MCF 10A (cell line): ENCODE measurements at regions of chr15 and their contacts with region 1.

Region 1: GRCh38 chr15:71780115-71780976 is 30.0 kb upstream of the NR2E3 start:
- DNase-seq: peak; percentile 57
- H3K4me3 Mint-ChIP-seq: no peak overlapping the region
- H3K27ac Mint-ChIP-seq: peak overlapping the region; percentile 76
- H3K4me1 Mint-ChIP-seq: peaks cover 10% of the 10 kb centered on the region
- H3K27me3 Mint-ChIP-seq: no peaks in the 10 kb centered on the region
- CTCF ChIP-seq: peak; percentile 66

Region 2: DNA sequence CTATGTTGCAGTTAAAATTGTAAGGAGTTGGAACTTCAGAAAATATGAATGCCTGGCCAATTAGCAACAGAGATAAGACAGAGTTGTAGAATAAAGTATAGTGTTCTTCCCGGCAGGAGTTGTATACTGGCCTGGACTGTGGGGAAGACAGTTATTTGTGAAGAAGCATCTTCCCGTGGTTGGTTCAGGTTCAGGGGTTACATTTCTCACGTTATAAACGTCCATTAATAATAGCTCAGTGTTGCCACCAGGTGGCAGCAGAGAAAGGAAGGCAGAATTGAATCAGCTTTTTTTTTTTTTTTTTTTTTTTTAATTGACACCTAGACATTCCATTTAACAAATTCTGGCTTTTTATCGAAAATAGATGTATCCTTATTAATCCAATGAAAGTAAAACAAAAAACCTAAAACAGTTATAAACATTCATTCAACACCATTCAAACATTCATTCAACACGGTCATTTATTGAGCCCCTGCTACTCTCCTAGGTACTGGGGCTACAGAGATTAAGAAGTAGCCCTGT is 36.4 kb before region 1 on chr15:
- CTCF ChIA-PET with region 1: interaction called, 15 read pairs
- POLR2A ChIA-PET with region 1: interaction called, 3 read pairs
- intact Hi-C with region 1: no loop called
- DNase-seq: peak; percentile 72
- H3K4me3 Mint-ChIP-seq: no peak overlapping the region
- H3K27ac Mint-ChIP-seq: no peak overlapping the region
- H3K4me1 Mint-ChIP-seq: peaks cover 19% of the 10 kb centered on the region
- H3K27me3 Mint-ChIP-seq: no peaks in the 10 kb centered on the region
- CTCF ChIP-seq: peak; percentile 56

Region 3: GRCh38 chr15:71752604-71753289 is 27.6 kb before region 1 on chr15:
- CTCF ChIA-PET with region 1: interaction called, 35 read pairs
- POLR2A ChIA-PET with region 1: interaction called, 10 read pairs
- intact Hi-C with region 1: no loop called
- DNase-seq: peak; percentile 91
- H3K4me3 Mint-ChIP-seq: peak overlapping the region; percentile 33
- H3K27ac Mint-ChIP-seq: peak overlapping the region; percentile 84
- H3K4me1 Mint-ChIP-seq: peaks cover 25% of the 10 kb centered on the region
- H3K27me3 Mint-ChIP-seq: no peaks in the 10 kb centered on the region
- CTCF ChIP-seq: peak; percentile 28